Panc1 (cell line): ENCODE measurements at regions of chr16 and their contacts with region 1.

Region 1: GRCh38 chr16:52912565-52913173 is 140.0 kb downstream of the CHD9NB start:
- DNase-seq: peak; percentile 55
- ATAC-seq: peak; percentile 83
- H3K4me3 ChIP-seq: no peak overlapping the region
- H3K27ac ChIP-seq: no peak overlapping the region
- H3K4me1 ChIP-seq: no peaks in the 10 kb centered on the region
- H3K27me3 ChIP-seq: no peaks in the 10 kb centered on the region
- CTCF ChIP-seq: peak; percentile 82

Region 2: DNA sequence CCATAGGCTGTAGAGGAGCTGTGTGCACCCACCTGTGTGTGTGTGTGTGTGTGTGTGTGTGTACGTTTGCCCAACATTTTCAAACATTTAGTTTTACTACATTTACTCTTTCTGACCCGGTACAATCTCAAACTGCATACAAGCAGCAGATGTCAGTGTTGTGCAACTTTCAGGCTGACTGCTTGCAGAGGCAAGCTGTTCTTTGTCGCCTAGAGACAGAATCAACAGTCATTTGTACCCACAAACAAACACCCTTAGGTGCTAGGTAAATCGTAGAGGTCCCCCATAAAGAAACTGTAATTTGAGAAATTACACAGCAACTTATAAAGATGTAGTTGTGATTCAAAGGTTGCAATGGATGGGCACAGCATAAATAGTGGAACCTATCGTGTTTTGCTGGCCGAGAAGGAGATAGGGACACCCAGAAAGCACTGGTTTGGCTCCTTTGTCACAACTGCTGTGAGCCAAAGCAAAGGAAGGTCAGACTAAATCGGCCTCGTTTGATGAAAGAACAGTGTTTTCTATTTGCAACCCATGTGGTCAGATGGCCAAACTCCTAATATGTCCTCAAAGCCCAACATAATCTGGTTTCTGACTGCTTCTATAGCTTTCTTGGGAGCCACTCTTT is 844.1 kb before region 1 on chr16:
- CTCF ChIA-PET with region 1: no interaction called
- POLR2A ChIA-PET with region 1: no interaction called
- in situ Hi-C with region 1: no loop called
- intact Hi-C with region 1: loop called (anchors 2 kb)
- DNase-seq: no peak
- ATAC-seq: no peak
- H3K4me3 ChIP-seq: no peak overlapping the region
- H3K27ac ChIP-seq: no peak overlapping the region
- H3K4me1 ChIP-seq: no peaks in the 10 kb centered on the region
- H3K27me3 ChIP-seq: no peaks in the 10 kb centered on the region
- CTCF ChIP-seq: peak; percentile 32; the same call in 1 of the 2 replicates

Region 3: GRCh38 chr16:52191531-52192134 is 721.0 kb before region 1 on chr16:
- CTCF ChIA-PET with region 1: interaction called, 6 read pairs
- POLR2A ChIA-PET with region 1: no interaction called
- in situ Hi-C with region 1: no loop called
- intact Hi-C with region 1: loop called (anchors 1 kb)
- DNase-seq: peak; percentile 43
- ATAC-seq: no peak
- H3K4me3 ChIP-seq: no peak overlapping the region
- H3K27ac ChIP-seq: no peak overlapping the region
- H3K4me1 ChIP-seq: no peaks in the 10 kb centered on the region
- H3K27me3 ChIP-seq: no peaks in the 10 kb centered on the region
- CTCF ChIP-seq: peak; percentile 84

Region 4: GRCh38 chr16:52976539-52977167 is 64.0 kb after region 1 on chr16:
- CTCF ChIA-PET with region 1: no interaction called
- POLR2A ChIA-PET with region 1: no interaction called
- in situ Hi-C with region 1: no loop called
- intact Hi-C with region 1: no loop called
- DNase-seq: no peak
- ATAC-seq: no peak
- H3K4me3 ChIP-seq: no peak overlapping the region
- H3K27ac ChIP-seq: no peak overlapping the region
- H3K4me1 ChIP-seq: no peaks in the 10 kb centered on the region
- H3K27me3 ChIP-seq: no peaks in the 10 kb centered on the region
- CTCF ChIP-seq: peak; percentile 32